K562 (cell line): ENCODE measurements at regions of chr15 and their contacts with region 1.

Region 1: DNA sequence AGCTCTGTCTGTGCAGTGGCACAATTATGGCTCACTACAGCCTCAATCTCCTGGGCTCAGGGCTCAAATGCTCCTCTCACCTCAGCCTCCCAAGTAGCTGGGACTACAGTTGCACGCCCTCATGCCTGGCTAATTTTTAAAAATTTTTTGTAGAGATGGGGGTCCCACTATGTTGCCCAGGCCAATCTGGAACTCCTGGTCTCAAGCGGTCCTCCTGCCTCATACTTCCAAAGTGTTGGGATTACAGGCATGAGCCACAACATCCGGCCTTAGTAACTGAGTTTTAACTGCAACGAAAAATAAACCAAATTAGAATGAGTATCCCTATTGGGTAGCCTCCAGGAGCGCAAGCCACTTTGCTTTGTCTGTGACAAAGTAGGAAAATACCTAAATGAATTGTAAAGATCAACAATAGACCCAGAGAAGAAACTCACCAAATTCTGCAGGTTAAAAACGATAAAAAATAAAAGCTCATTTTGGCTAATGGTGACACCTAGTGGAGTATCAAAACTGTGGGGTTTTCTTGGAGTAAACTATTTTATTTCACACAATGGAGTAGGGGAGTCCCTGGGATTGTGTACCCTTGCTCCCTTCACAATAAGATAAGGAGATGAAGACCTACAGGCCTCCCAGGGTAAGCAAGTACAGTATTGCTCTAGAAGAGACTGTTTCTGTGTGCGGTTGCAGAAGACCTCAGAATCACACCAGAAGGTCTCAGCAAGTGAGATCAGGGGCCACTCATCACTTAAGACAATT is 21.0 kb upstream of the CA12 start:
- DNase-seq: peak in 3 of 4 experiments; percentile 20 to 57 (median 54)
- ATAC-seq: peak; percentile 79
- H3K4me3 ChIP-seq: no peak overlapping the region
- H3K27ac ChIP-seq: no peak overlapping the region
- H3K4me1 ChIP-seq: peaks cover 0 to 12% of the 10 kb centered on the region in 2 experiments; a peak in 3 of 5 replicates
- H3K27me3 ChIP-seq: no peaks in the 10 kb centered on the region
- CTCF ChIP-seq: peak; percentile 53 to 85 (median 58); a peak in 3 of 6 replicates
- EP300 ChIP-seq: no peak
- POLR2A ChIP-seq: no peak
- RAD21 ChIP-seq: peak; percentile 96 to 97

Region 2: DNA sequence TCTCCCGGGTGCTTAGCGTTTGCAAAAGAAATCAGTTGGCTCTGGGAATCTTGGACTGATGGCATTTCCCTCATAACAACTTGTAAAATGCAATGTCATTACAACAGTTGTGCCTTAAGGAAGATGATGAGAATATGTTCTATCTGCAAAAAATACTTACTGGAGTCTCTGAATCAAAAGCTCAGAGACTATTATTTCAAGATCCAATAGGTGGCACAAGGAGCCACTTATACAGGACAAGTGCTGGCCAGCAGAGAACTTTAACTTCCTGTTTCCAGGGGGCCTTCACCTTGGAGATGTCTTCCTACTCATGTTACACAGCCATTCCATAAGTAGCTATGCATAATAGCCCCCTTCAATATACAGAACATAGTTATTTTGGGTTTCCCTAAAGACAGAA is 236.5 kb before region 1 on chr15:
- CTCF ChIA-PET with region 1: interaction called, 3 read pairs
- POLR2A ChIA-PET with region 1: no interaction called
- in situ Hi-C with region 1: no loop called
- intact Hi-C with region 1: loop called (anchors 10 kb)
- DNase-seq: peak in 2 of 4 experiments; percentile 51 to 60
- ATAC-seq: peak; percentile 90
- H3K4me3 ChIP-seq: no peak overlapping the region
- H3K27ac ChIP-seq: no peak overlapping the region
- H3K4me1 ChIP-seq: no peaks in the 10 kb centered on the region
- H3K27me3 ChIP-seq: no peaks in the 10 kb centered on the region
- CTCF ChIP-seq: peak; percentile 23 to 60 (median 37); a peak in 3 of 6 replicates
- EP300 ChIP-seq: no peak
- POLR2A ChIP-seq: no peak
- RAD21 ChIP-seq: peak; percentile 34 to 74

Region 3: GRCh38 chr15:63502843-63503738 is 100.4 kb after region 1 on chr15:
- CTCF ChIA-PET with region 1: no interaction called
- POLR2A ChIA-PET with region 1: no interaction called
- in situ Hi-C with region 1: no loop called
- intact Hi-C with region 1: no loop called
- DNase-seq: peak; percentile 71 to 88 (median 74)
- ATAC-seq: peak; percentile 65
- H3K4me3 ChIP-seq: peak overlapping the region; percentile 56
- H3K27ac ChIP-seq: peak overlapping the region; percentile 95
- H3K4me1 ChIP-seq: peaks cover 23 to 30% of the 10 kb centered on the region in 2 experiments
- H3K27me3 ChIP-seq: no peaks in the 10 kb centered on the region
- CTCF ChIP-seq: peak in 1 of 3 experiments; percentile 15; a peak in 1 of 6 replicates
- EP300 ChIP-seq: peak; percentile 40
- POLR2A ChIP-seq: no peak; the same call in 1 of the 2 replicates
- RAD21 ChIP-seq: 0 out of 4 replicates have a peak, but pooled peaks of 1 of the 2 experiments have one; percentile 5

Region 4: DNA sequence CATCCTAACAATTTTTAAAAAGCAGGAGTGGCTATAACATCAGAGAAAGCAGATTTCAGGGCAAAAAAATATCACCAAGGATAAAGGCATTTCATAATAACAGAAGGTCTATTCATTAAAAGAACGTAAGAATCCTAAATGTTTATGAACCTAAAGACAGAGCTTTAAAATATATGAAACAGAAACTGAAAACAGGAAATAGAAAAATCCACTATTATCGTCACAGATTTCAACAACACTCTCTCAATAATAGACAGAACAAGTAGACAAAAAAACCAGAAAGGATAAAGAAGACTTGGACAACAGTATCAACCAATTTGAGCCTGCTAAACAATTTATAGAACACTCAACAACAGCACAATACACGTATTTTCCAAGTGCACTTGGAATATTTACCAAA is 265.9 kb after region 1 on chr15:
- CTCF ChIA-PET with region 1: no interaction called
- POLR2A ChIA-PET with region 1: no interaction called
- in situ Hi-C with region 1: no loop called
- intact Hi-C with region 1: no loop called
- DNase-seq: no peak
- ATAC-seq: no peak
- H3K4me3 ChIP-seq: no peak overlapping the region
- H3K27ac ChIP-seq: no peak overlapping the region
- H3K4me1 ChIP-seq: no peaks in the 10 kb centered on the region
- H3K27me3 ChIP-seq: no peaks in the 10 kb centered on the region
- CTCF ChIP-seq: no peak
- EP300 ChIP-seq: no peak
- POLR2A ChIP-seq: no peak
- RAD21 ChIP-seq: no peak